Activated CD4-positive, alpha-beta T cell treated with anti-CD3 and anti-CD28 coated beads, Interleukin-2, amount 10 ng/mL, durations not matched to agents 7 days and 5 days (primary cell): ENCODE measurements at regions of chr4 and their contacts with region 1.

Region 1: GRCh38 chr4:47463235-47463956 is at the start of gene COMMD8:
- DNase-seq: peak; percentile 98
- H3K4me3 Mint-ChIP-seq: peak within 1 kb of the TSS; percentile 84
- H3K27ac Mint-ChIP-seq: peak within 1 kb of the TSS; percentile 90
- H3K4me1 Mint-ChIP-seq: peaks cover 31% of the 10 kb centered on the region
- H3K27me3 Mint-ChIP-seq: no peaks in the 10 kb centered on the region
- total RNA-seq, gene COMMD8: 19.9 to 23.0 TPM

Region 2: GRCh38 chr4:47485047-47485692 is 21.8 kb after region 1 on chr4 and contains the start of gene ATP10D:
- CTCF ChIA-PET with region 1: interaction called, 14 read pairs
- POLR2A ChIA-PET with region 1: interaction called, 5 read pairs
- DNase-seq: peak; percentile 75
- H3K4me3 Mint-ChIP-seq: peak within 1 kb of the TSS; percentile 91
- H3K27ac Mint-ChIP-seq: peak within 1 kb of the TSS; percentile 95
- H3K4me1 Mint-ChIP-seq: peaks cover 29% of the 10 kb centered on the region
- H3K27me3 Mint-ChIP-seq: no peaks in the 10 kb centered on the region
- total RNA-seq, gene ATP10D: 3.7 to 4.1 TPM

Region 3: GRCh38 chr4:47668810-47669408 is 205.5 kb after region 1 on chr4:
- CTCF ChIA-PET with region 1: no interaction called
- POLR2A ChIA-PET with region 1: no interaction called
- DNase-seq: peak; percentile 30
- H3K4me3 Mint-ChIP-seq: no peak overlapping the region
- H3K27ac Mint-ChIP-seq: no peak overlapping the region
- H3K4me1 Mint-ChIP-seq: no peaks in the 10 kb centered on the region
- H3K27me3 Mint-ChIP-seq: peaks cover 17% of the 10 kb centered on the region